ENCODE measurements at regions of chr12 and their contacts with region 1.

Region 1: DNA sequence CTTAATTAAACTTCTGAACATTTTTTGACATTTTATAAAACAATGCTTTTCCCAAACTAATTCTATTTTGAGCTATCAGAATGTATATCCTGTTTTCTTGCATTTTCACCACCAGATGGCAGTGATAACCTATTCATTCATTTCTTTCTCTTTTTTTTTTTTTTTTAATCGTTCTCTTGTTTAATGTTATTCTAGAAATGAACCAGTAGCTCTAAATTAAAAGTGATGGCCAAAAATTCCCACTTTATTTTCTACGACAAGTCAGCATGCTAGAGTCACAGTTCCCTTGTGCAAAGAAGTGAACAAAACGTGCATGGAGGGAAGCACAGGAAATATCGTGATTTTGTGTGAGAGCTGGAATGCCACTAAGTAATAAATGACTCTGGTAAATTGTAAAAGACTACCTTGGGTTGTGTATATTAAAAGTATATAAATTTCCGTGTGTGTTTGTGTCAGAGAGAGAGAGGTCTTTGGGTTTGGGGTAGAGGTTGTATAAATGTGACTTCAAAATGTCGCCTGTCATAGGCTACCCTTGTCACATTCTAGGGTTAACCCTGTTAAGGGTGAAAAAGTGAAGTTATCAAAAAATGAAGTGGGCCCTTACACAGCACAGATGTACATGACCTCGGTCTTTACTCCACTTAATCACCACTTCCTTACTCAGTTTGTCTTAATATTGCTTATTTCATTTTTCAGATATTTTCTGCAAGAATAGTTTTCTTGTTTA is 40.4 kb upstream of the LDHB start:
- DNase-seq: peak; percentile 49
- H3K4me3 ChIP-seq: no peak overlapping the region
- H3K27ac ChIP-seq: no peak overlapping the region
- H3K4me1 ChIP-seq: no peaks in the 10 kb centered on the region
- H3K27me3 ChIP-seq: peaks cover 3 to 5% of the 10 kb centered on the region in 2 experiments
- CTCF ChIP-seq: peak; percentile 17 to 21
- POLR2A ChIP-seq: no peak

Region 2: DNA sequence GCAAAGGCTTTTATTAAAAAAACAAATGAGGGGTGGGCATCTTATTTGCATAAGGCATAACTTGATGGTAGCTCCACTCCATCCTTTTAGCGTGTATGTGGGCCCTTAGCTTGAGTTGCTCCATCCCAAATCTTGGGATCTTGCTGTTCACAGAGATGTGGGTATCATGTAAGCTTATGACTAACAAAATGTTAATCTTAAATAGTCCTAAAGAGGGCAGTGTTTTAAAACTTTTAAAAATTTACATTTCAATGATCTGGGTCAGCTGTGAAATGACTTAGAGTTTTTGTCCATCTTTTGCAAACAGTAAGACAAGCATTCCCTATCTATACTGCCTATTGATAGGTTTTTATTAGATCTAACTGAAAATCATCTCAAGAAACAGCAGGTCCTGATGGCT is 449.4 kb before region 1 on chr12:
- CTCF ChIA-PET with region 1: interaction called, 11 read pairs
- POLR2A ChIA-PET with region 1: no interaction called
- dilution Hi-C with region 1: no loop called
- intact Hi-C with region 1: no loop called
- DNase-seq: peak; percentile 22
- H3K4me3 ChIP-seq: no peak overlapping the region
- H3K27ac ChIP-seq: no peak overlapping the region
- H3K4me1 ChIP-seq: no peaks in the 10 kb centered on the region
- H3K27me3 ChIP-seq: no peaks in the 10 kb centered on the region
- CTCF ChIP-seq: no peak
- POLR2A ChIP-seq: no peak

Region 3: DNA sequence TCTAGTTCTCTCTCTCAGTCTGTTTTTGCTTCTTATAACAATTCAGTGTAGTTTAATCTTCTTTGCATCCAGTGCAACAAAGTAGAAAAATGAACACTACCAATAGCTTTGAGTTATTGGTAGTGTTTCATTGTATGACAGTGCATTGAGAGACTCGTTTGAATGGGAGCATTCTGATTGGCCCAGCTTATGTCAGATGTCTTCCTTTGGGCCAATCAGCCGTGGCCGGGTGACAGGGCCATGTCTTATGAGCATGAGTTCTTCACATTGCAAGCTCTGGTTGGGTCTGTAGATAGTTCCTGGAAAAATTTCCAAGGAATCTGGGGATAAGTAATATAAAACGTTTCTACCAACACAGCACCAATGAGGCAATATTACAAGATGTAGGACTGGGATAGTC is 130.0 kb before region 1 on chr12:
- CTCF ChIA-PET with region 1: no interaction called
- POLR2A ChIA-PET with region 1: no interaction called
- dilution Hi-C with region 1: no loop called
- intact Hi-C with region 1: no loop called
- DNase-seq: no peak
- H3K4me3 ChIP-seq: no peak overlapping the region
- H3K27ac ChIP-seq: no peak overlapping the region
- H3K4me1 ChIP-seq: no peaks in the 10 kb centered on the region
- H3K27me3 ChIP-seq: no peaks in the 10 kb centered on the region
- CTCF ChIP-seq: no peak
- POLR2A ChIP-seq: no peak

Region 4: DNA sequence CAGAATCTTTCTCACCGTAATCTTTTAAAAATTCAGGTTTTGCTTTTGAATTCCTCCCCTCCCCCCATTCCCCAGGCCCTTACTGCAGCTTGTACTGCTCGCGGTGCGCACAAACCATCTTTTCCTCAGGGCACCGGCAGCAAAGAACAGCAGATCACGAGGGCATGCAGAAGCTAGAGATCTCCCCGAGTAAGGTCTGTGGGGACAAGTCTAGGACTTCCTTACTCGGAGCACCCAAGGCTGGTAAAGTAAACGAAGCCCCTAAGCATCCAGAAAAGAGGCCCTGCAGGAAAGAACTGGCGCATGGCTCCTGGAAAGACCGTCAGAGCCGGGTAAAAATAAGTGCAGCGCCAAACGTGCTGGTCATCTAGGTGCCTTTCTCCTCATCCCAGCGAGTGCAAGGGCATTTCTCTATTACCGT is 41.2 kb before region 1 on chr12:
- CTCF ChIA-PET with region 1: no interaction called
- POLR2A ChIA-PET with region 1: no interaction called
- dilution Hi-C with region 1: no loop called
- intact Hi-C with region 1: no loop called
- DNase-seq: peak; percentile 69
- H3K4me3 ChIP-seq: peak overlapping the region; percentile 83 to 89 (median 85)
- H3K27ac ChIP-seq: peak overlapping the region; percentile 83
- H3K4me1 ChIP-seq: peaks cover 14% of the 10 kb centered on the region
- H3K27me3 ChIP-seq: peaks cover 2 to 9% of the 10 kb centered on the region in 2 experiments
- CTCF ChIP-seq: no peak
- POLR2A ChIP-seq: no peak

Region 5: DNA sequence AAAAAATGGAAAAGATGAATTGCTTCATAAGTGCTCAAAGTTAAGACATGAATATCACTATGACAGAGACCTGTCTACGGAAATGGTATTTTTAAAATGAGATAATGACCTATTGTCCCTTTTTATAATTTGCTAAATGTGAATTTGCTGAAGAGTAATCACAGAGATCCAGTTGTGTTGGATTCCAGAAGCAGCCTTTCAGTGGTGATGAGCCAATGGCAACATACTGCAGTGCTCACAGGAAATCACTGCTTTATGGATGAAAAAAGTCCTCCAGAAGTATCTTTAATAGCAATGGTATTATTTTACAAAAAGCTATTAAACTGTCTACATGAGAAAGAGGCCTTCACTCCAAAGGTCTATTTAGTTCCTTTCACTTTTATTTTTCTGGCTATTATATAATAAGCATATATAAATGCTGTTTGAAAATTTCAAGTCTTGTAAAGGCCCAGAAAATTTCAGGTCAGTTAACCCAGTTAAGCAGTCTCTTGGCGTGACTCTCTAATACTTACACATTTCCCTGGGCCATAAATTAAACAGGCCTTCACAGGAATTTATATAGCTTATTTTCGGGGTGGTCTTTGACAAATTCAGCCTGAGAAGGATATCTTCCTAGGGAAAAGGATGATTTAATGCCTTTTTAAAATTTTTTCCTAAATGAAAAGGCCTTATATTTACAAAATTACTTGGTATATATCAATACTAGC is 21.0 kb after region 1 on chr12:
- CTCF ChIA-PET with region 1: interaction called, 10 read pairs
- POLR2A ChIA-PET with region 1: no interaction called
- dilution Hi-C with region 1: no loop called
- intact Hi-C with region 1: no loop called
- DNase-seq: peak; percentile 41
- H3K4me3 ChIP-seq: no peak overlapping the region
- H3K27ac ChIP-seq: no peak overlapping the region
- H3K4me1 ChIP-seq: peaks cover 22% of the 10 kb centered on the region
- H3K27me3 ChIP-seq: no peaks in the 10 kb centered on the region
- CTCF ChIP-seq: no peak
- POLR2A ChIP-seq: no peak

Region 6: GRCh38 chr12:21989819-21990412 is 291.8 kb after region 1 on chr12:
- CTCF ChIA-PET with region 1: interaction called, 517 read pairs
- POLR2A ChIA-PET with region 1: no interaction called
- dilution Hi-C with region 1: no loop called
- intact Hi-C with region 1: loop called (anchors 1 kb)
- DNase-seq: peak; percentile 41
- H3K4me3 ChIP-seq: no peak overlapping the region
- H3K27ac ChIP-seq: no peak overlapping the region
- H3K4me1 ChIP-seq: peaks cover 9% of the 10 kb centered on the region
- H3K27me3 ChIP-seq: peaks cover 0 to 3% of the 10 kb centered on the region in 2 experiments
- CTCF ChIP-seq: peak; percentile 28 to 38
- POLR2A ChIP-seq: no peak

Region 7: GRCh38 chr12:22046090-22046967 is 348.3 kb after region 1 on chr12 and contains the start of gene CMAS:
- CTCF ChIA-PET with region 1: interaction called, 14 read pairs
- POLR2A ChIA-PET with region 1: no interaction called
- dilution Hi-C with region 1: no loop called
- intact Hi-C with region 1: no loop called
- DNase-seq: peak; percentile 56
- H3K4me3 ChIP-seq: peak within 1 kb of the TSS; percentile 90 to 92 (median 92)
- H3K27ac ChIP-seq: peak within 1 kb of the TSS; percentile 69
- H3K4me1 ChIP-seq: peaks cover 12% of the 10 kb centered on the region
- H3K27me3 ChIP-seq: no peaks in the 10 kb centered on the region
- CTCF ChIP-seq: no peak
- POLR2A ChIP-seq: peak; percentile 73
- total RNA-seq, gene CMAS: 34.4 and 35.4 TPM in 2 replicates

Region 8: DNA sequence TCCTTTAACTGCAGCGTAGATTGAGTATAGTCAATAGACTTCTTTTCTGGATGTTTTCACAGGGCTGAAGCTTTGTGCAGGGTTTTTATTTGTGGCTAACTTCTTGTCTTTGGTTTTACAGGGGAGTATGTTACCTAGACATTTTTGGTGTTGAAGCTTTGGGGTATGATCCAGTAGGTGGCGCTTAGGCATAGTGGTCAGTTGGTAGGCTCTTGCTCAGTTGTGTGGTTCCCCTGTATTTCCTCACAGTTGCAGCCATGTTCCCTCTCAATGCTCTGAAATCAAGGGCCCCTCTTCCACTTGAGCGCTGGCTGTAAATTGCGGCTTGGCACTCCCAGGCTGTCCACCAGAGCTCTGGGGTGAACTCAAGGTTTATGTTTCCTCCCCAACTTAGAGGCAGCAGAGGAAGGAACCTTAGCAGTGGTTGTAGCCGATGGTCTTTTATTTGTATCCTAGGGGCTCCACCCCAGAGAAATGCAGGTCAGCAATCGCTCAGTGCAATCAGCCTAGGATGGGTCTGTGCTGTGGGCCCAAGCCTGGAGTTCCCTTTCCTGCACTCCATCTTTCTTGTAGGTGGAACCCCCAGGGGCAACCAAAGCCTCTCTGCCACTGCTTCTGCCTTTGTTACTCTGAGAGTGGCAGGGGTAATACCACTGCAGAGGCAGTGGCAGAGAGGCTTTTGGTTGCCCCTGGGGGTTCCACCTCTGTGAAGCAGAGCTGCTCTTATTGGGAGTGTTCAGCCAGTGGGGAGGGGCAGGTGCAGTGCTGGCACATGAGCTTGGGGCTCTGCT is 403.1 kb after region 1 on chr12:
- CTCF ChIA-PET with region 1: interaction called, 10 read pairs
- POLR2A ChIA-PET with region 1: no interaction called
- dilution Hi-C with region 1: no loop called
- intact Hi-C with region 1: no loop called
- DNase-seq: peak; percentile 57
- H3K4me3 ChIP-seq: no peak overlapping the region
- H3K27ac ChIP-seq: no peak overlapping the region
- H3K4me1 ChIP-seq: peaks cover 4% of the 10 kb centered on the region
- H3K27me3 ChIP-seq: peaks cover 3 to 6% of the 10 kb centered on the region in 2 experiments
- CTCF ChIP-seq: peak; percentile 42 to 77
- POLR2A ChIP-seq: no peak

Region 9: GRCh38 chr12:22459838-22460490 is 761.9 kb after region 1 on chr12:
- CTCF ChIA-PET with region 1: interaction called, 44 read pairs
- POLR2A ChIA-PET with region 1: no interaction called
- dilution Hi-C with region 1: no loop called
- intact Hi-C with region 1: no loop called
- DNase-seq: peak; percentile 37
- H3K4me3 ChIP-seq: no peak overlapping the region
- H3K27ac ChIP-seq: no peak overlapping the region
- H3K4me1 ChIP-seq: no peaks in the 10 kb centered on the region
- H3K27me3 ChIP-seq: no peaks in the 10 kb centered on the region
- CTCF ChIP-seq: peak; percentile 40 to 44
- POLR2A ChIP-seq: no peak

Measured in endothelial cell of umbilical vein (primary cell).